ENCODE measurements at regions of chr10 and their contacts with region 1.

Region 1: GRCh38 chr10:122298598-122299301 is 27.7 kb downstream of the BTBD16 start:
- DNase-seq: no peak
- H3K4me3 ChIP-seq: peak overlapping the region; percentile 43
- CTCF ChIP-seq: peak; percentile 89

Region 2: GRCh38 chr10:122142641-122143237 is 156.0 kb before region 1 on chr10:
- CTCF ChIA-PET with region 1: interaction called, 13 read pairs
- POLR2A ChIA-PET with region 1: no interaction called
- DNase-seq: no peak
- H3K4me3 ChIP-seq: no peak overlapping the region
- CTCF ChIP-seq: peak; percentile 94

Region 3: GRCh38 chr10:122213766-122214165 is 85.0 kb before region 1 on chr10:
- CTCF ChIA-PET with region 1: no interaction called
- POLR2A ChIA-PET with region 1: no interaction called
- DNase-seq: no peak
- H3K4me3 ChIP-seq: no peak overlapping the region
- CTCF ChIP-seq: no peak

Region 4: DNA sequence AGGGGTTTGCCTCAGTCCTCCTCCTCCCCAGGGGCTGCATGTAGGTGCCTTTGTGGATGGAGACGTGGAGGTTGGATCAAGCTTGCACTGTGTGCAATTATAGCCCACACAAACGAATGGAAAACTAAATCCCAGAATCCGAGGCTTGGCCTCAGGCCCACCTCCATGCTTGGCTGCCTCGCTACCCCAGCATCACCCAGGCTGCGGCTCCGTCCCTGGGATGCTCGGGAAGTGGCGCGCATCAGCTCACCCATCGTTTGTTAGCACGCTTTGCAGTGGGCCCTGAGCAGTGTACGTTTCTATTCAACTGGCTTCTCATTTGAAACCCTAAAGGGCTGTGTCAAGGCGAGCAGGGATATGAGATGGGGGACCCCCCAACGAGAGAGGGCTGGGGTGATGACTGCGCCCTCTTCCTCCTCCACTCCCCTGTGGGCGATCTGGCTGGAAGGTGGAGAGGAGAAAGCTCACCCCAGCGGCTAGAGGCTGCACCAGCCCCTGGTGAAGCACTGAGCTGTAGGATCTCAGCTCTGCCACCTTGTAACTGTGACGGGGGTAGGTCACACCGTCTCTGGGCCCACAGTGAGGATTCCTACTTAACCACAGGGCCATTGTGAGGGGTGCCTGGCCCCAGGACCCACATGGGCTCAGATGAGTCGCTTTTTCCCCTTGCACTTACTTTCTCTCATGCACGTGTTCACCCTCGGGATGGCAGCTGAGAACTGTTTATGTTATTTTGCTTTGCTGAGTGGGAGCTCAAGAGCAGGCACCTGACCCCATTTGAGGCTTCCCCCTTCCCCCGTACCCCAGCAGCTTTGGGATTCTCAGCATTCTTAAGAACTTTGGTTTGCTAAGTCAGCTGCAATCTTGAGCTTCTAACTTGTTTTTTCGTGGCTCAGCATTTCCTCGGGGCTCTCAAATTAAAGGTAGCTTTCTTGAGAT is 40.3 kb before region 1 on chr10:
- CTCF ChIA-PET with region 1: no interaction called
- POLR2A ChIA-PET with region 1: no interaction called
- DNase-seq: no peak
- H3K4me3 ChIP-seq: no peak overlapping the region
- CTCF ChIP-seq: no peak

Region 5: DNA sequence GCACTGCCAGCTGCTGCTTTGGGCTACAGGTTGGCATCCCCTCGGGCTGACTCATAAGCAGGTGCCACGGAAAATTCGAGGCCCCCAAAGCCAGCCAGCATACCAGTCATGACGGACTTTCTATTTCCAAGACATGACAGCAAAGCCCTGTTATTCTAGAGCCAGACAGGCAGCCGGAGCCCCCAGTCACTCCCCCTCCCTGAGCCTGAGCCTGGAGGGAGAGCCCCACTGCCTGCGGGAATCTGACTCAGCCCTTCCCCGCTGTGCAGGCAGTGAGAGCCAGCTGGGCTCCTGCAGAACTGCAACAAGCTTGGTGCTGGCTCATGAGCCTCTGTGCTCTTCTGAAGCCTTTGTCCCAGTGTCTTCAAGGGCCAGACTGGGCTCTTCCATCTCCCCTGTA is 11.9 kb before region 1 on chr10:
- CTCF ChIA-PET with region 1: interaction called, 42 read pairs
- POLR2A ChIA-PET with region 1: no interaction called
- DNase-seq: no peak
- H3K4me3 ChIP-seq: no peak overlapping the region
- CTCF ChIP-seq: no peak

Region 6: DNA sequence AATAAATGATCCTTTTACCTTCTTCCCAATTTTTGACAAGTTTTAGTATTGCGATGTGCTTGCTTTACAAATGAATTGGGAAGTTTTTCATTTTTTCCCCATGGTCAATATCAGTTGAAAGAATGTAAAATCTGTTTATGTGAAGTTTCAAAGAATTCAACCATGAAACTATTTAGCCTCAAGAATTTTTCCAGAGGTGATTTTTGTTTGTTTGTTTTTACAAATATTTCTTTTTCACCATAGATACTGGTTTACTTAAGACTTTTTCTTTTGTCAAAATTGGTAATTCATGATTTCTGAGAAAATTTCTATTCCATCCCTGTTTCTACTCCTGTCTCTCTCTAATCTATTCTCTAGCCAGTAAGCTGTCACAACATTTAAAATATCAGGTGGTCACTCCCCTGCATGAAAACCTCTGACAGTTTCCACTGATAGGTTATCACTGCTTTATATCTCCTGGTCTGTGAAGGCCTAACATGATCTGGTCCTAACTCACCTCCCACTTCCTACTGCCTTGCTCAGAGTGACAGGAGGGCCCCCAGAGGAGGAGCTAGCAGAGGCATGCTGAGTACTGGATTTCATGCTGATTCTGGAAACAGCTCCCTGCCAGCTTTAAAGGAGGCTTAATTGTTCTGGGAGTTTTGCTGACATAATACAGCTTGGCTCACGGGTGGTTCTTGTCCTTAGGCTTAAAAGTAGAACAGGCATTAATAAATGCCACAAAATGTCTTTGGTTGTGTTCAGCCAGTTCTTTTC is 148.1 kb after region 1 on chr10:
- CTCF ChIA-PET with region 1: interaction called, 11 read pairs
- POLR2A ChIA-PET with region 1: no interaction called
- DNase-seq: no peak
- H3K4me3 ChIP-seq: no peak overlapping the region
- CTCF ChIP-seq: no peak

Region 7: DNA sequence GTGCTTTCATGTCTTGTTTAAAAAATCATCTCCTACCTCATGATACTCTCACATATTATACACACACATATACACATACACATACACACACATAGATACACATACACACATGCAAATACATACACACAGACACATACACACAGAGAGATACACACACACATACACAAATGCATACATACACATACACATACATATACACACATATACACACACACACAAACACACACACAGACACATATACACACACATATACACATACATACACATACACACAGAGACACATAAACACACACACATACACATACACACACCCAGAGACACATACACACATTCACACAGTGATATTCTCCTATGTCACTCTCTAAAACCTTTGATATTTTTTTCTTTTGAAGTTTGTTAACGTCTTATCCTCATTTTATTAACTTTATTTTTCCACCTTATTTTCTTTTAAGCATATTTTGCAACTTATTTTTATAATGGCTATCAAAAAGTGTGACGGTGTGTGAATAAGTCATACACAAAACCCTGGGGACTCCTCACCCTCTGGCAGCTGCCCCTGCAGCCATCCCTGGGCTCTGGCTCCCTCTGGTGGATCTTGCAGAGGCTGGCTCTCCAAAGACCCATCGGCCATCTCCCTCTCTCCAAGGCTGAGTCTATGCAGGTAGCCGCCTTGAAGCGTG is 404.8 kb after region 1 on chr10:
- CTCF ChIA-PET with region 1: interaction called, 15 read pairs
- POLR2A ChIA-PET with region 1: no interaction called
- DNase-seq: no peak
- H3K4me3 ChIP-seq: no peak overlapping the region
- CTCF ChIP-seq: peak; percentile 87

Measured in AG04449 (cell line).